ENCODE measurements at regions of chr3 and their contacts with region 1.

Region 1: DNA sequence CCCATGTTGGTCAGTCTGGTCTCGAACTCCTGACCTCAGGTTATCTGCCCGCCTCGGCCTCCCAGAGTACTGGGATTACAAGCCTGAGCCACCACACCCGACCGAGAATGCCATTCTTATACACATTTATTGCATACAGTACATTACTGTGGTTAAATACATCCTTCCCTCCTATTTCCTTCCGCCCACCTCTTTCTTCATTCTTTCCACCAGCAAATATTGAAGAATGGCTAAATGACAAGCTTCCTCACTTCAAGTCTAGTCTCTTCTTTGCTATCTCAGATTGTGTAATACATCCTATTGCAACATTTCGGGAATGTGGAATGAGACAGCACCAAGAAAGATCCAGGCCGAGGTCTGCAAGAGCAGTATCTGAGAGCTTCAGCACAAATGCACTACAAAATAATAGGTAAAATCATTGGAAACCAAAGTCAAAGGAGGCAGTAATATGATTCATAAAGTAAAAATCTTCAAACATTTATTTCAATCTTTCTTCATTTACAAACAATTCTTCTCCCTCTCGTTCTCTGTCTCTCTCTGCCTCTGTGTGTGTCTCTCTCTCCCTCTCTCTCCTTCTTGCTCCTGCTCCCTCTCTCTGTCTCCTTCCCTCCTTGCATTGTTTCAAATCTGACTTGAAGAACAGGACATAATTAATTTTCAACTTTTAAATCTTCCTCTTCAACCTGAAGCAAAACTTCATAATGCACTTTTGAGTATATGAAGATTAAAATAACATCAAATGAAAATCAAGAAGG is 94.7 kb upstream of the TGFBR2 start:
- DNase-seq: peak; percentile 97
- H3K4me3 Mint-ChIP-seq: no peak overlapping the region
- H3K27ac Mint-ChIP-seq: peak overlapping the region; percentile 72
- H3K4me1 Mint-ChIP-seq: peaks cover 37% of the 10 kb centered on the region
- H3K27me3 Mint-ChIP-seq: no peaks in the 10 kb centered on the region
- CTCF ChIP-seq: no peak

Region 2: GRCh38 chr3:29850641-29851040 is 661.1 kb before region 1 on chr3:
- CTCF ChIA-PET with region 1: no interaction called
- POLR2A ChIA-PET with region 1: no interaction called
- intact Hi-C with region 1: no loop called
- DNase-seq: no peak
- H3K4me3 Mint-ChIP-seq: no peak overlapping the region
- H3K27ac Mint-ChIP-seq: no peak overlapping the region
- H3K4me1 Mint-ChIP-seq: no peaks in the 10 kb centered on the region
- H3K27me3 Mint-ChIP-seq: no peaks in the 10 kb centered on the region
- CTCF ChIP-seq: no peak

Region 3: DNA sequence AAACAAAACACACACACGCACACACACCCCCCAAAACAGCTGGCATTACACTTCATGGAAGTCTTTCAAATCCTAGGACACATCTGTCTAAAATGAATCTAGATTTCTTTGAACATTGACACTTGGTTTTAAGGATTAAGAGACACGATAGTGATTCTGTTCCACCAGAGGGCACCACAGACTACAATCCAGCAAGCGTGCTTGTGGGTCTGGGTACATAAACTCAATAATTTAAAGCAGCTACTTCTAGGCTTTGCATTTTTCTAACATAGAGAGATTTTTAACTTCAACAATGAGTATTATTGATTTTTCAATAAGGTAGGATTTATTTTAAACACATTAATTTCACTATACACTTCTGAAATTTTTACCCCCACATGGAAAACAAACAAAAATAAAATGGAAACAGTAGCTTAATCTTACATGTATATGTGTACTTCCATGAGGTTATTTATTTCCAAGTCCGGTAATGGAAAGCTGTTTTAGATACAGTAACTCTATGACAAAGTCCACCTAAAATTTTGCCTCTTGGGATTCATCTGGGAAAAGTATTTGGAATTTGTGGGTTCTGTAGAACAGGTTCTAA is 469.3 kb before region 1 on chr3:
- CTCF ChIA-PET with region 1: no interaction called
- POLR2A ChIA-PET with region 1: no interaction called
- intact Hi-C with region 1: loop called (anchors 10 kb)
- DNase-seq: peak; percentile 80
- H3K4me3 Mint-ChIP-seq: no peak overlapping the region
- H3K27ac Mint-ChIP-seq: no peak overlapping the region
- H3K4me1 Mint-ChIP-seq: no peaks in the 10 kb centered on the region
- H3K27me3 Mint-ChIP-seq: no peaks in the 10 kb centered on the region
- CTCF ChIP-seq: peak; percentile 86

Region 4: GRCh38 chr3:30112902-30113484 is 398.7 kb before region 1 on chr3:
- CTCF ChIA-PET with region 1: no interaction called
- POLR2A ChIA-PET with region 1: no interaction called
- intact Hi-C with region 1: loop called (anchors 10 kb)
- DNase-seq: peak; percentile 46
- H3K4me3 Mint-ChIP-seq: no peak overlapping the region
- H3K27ac Mint-ChIP-seq: no peak overlapping the region
- H3K4me1 Mint-ChIP-seq: peaks cover 16% of the 10 kb centered on the region
- H3K27me3 Mint-ChIP-seq: no peaks in the 10 kb centered on the region
- CTCF ChIP-seq: peak; percentile 66

Region 5: GRCh38 chr3:30286007-30286669 is 225.6 kb before region 1 on chr3:
- CTCF ChIA-PET with region 1: no interaction called
- POLR2A ChIA-PET with region 1: interaction called, 4 read pairs
- intact Hi-C with region 1: loop called (anchors 5 kb)
- DNase-seq: peak; percentile 97
- H3K4me3 Mint-ChIP-seq: peak overlapping the region; percentile 26
- H3K27ac Mint-ChIP-seq: peak overlapping the region; percentile 69
- H3K4me1 Mint-ChIP-seq: peaks cover 58% of the 10 kb centered on the region
- H3K27me3 Mint-ChIP-seq: no peaks in the 10 kb centered on the region
- CTCF ChIP-seq: no peak

Region 6: DNA sequence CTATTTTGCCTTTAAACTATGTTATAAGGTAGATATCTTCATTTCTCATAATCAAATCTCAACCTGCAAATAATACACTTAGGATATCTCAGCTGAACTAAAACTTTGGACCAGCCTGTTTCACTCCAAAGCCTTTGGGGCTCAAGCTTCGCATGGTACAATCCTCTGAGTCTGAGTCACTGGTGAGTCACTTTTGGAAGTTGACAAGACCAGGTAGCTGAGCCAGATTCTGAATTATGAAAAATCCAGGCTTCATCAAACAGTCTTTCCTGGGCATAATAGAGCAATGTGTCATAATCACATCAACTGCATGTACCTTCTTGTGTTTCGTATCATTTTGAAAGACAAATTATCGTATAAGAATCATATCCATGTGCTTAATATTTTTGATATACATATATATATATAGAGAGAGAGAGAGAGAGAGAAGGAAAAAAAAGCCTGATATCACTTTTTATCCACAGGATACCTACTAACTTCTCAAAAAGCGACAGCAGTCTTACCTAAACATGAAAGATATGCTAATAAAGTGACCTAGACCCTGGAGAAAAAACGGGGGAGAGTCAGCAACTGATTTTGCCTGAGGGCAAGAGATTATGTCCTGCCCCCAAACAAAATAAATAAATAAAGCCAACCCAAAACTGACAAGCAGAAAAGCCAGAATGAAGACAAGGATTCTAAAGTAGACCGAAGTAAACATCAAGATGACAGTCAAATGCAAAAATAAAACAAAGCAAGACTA is 169.2 kb before region 1 on chr3:
- CTCF ChIA-PET with region 1: no interaction called
- POLR2A ChIA-PET with region 1: interaction called, 10 read pairs
- intact Hi-C with region 1: loop called (anchors 2 kb)
- DNase-seq: peak; percentile 97
- H3K4me3 Mint-ChIP-seq: peak overlapping the region; percentile 38
- H3K27ac Mint-ChIP-seq: peak overlapping the region; percentile 94
- H3K4me1 Mint-ChIP-seq: peaks cover 39% of the 10 kb centered on the region
- H3K27me3 Mint-ChIP-seq: no peaks in the 10 kb centered on the region
- CTCF ChIP-seq: no peak

Region 7: DNA sequence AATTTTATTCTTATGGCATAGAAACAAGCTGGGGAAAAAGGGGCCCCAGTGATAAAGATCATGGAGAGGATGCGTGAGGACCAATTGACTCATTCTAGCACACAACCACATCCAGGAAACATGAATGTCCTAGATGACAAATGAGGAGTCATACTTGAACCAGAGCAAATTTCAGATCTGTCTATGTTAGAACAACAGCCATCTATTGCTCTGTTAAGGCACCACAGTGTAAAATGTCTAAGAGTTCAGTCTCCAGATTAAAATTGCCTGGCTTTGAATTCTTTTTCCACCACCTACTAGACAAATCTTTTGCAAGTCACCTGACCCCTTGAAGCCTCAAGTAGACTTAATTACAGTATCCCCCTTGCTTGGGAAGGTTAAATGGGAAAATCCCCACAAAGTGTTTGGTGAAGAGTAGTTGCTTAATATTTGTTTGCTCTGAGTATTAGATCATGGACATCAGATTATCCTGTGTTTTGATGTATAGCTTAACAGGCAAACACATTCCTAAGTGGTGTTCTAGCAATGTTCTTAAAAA is 164.0 kb before region 1 on chr3:
- CTCF ChIA-PET with region 1: no interaction called
- POLR2A ChIA-PET with region 1: interaction called, 10 read pairs
- intact Hi-C with region 1: loop called (anchors 2 kb)
- DNase-seq: peak; percentile 85
- H3K4me3 Mint-ChIP-seq: no peak overlapping the region
- H3K27ac Mint-ChIP-seq: peak overlapping the region; percentile 76
- H3K4me1 Mint-ChIP-seq: peaks cover 54% of the 10 kb centered on the region
- H3K27me3 Mint-ChIP-seq: no peaks in the 10 kb centered on the region
- CTCF ChIP-seq: no peak

Measured in MCF 10A (cell line).